Calu3 (cell line): ENCODE measurements at regions of chr17 and their contacts with region 1.

Region 1: GRCh38 chr17:37339321-37339720 is 36.5 kb upstream of the C17orf78 start:
- DNase-seq: no peak
- H3K4me3 Mint-ChIP-seq: no peak overlapping the region
- H3K27ac Mint-ChIP-seq: no peak overlapping the region
- H3K4me1 Mint-ChIP-seq: no peaks in the 10 kb centered on the region
- H3K27me3 Mint-ChIP-seq: no peaks in the 10 kb centered on the region
- CTCF ChIP-seq: no peak

Region 2: DNA sequence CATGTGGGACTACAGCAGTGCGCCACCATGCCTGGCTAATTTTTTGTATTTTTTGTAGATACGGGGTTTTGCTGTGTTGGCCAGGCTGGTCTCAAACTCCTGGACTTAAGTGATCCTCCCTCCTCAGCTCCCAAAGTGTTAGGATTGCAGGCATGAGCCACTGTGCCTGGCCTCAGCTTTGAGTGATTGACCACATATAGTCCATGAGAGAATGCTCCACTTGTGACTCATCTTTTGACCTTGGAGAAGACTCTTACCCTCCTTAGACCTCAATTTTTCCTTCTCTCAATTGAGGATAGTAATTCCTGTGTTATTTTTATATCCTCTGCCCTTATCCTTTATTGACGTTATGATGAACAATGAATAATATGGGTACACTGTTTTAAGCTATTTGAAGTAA is 119.5 kb after region 1 on chr17:
- CTCF ChIA-PET with region 1: interaction called, 13 read pairs
- intact Hi-C with region 1: no loop called
- DNase-seq: no peak
- H3K4me3 Mint-ChIP-seq: no peak overlapping the region
- H3K27ac Mint-ChIP-seq: no peak overlapping the region
- H3K4me1 Mint-ChIP-seq: no peaks in the 10 kb centered on the region
- H3K27me3 Mint-ChIP-seq: no peaks in the 10 kb centered on the region
- CTCF ChIP-seq: no peak